ENCODE measurements at regions of chr10 and their contacts with region 1.

Region 1: GRCh38 chr10:72260588-72261322 is 13.0 kb upstream of the DDIT4 start:
- DNase-seq: peak; percentile 97
- ATAC-seq: peak; percentile 75
- H3K4me3 Mint-ChIP-seq: peak overlapping the region; percentile 78
- H3K27ac Mint-ChIP-seq: peak overlapping the region; percentile 97
- H3K4me1 Mint-ChIP-seq: peaks cover 70% of the 10 kb centered on the region
- H3K27me3 Mint-ChIP-seq: no peaks in the 10 kb centered on the region

Region 2: GRCh38 chr10:72097448-72098300 is 163.1 kb before region 1 on chr10:
- CTCF ChIA-PET with region 1: no interaction called
- POLR2A ChIA-PET with region 1: no interaction called
- intact Hi-C with region 1: loop called in 1 of 2 experiments (anchors 2 kb)
- DNase-seq: no peak
- ATAC-seq: peak; percentile 60
- H3K4me3 Mint-ChIP-seq: no peak overlapping the region
- H3K27ac Mint-ChIP-seq: peak overlapping the region; percentile 53
- H3K4me1 Mint-ChIP-seq: peaks cover 72% of the 10 kb centered on the region
- H3K27me3 Mint-ChIP-seq: no peaks in the 10 kb centered on the region

Region 3: GRCh38 chr10:72223743-72224101 is 37.0 kb before region 1 on chr10:
- CTCF ChIA-PET with region 1: interaction called, 16 read pairs
- POLR2A ChIA-PET with region 1: interaction called, 4 read pairs
- intact Hi-C with region 1: loop called in 1 of 2 experiments (anchors 1 kb)
- DNase-seq: no peak
- ATAC-seq: peak; percentile 41
- H3K4me3 Mint-ChIP-seq: peak overlapping the region; percentile 52
- H3K27ac Mint-ChIP-seq: peak overlapping the region; percentile 92
- H3K4me1 Mint-ChIP-seq: peaks cover 55% of the 10 kb centered on the region
- H3K27me3 Mint-ChIP-seq: no peaks in the 10 kb centered on the region

Region 4: DNA sequence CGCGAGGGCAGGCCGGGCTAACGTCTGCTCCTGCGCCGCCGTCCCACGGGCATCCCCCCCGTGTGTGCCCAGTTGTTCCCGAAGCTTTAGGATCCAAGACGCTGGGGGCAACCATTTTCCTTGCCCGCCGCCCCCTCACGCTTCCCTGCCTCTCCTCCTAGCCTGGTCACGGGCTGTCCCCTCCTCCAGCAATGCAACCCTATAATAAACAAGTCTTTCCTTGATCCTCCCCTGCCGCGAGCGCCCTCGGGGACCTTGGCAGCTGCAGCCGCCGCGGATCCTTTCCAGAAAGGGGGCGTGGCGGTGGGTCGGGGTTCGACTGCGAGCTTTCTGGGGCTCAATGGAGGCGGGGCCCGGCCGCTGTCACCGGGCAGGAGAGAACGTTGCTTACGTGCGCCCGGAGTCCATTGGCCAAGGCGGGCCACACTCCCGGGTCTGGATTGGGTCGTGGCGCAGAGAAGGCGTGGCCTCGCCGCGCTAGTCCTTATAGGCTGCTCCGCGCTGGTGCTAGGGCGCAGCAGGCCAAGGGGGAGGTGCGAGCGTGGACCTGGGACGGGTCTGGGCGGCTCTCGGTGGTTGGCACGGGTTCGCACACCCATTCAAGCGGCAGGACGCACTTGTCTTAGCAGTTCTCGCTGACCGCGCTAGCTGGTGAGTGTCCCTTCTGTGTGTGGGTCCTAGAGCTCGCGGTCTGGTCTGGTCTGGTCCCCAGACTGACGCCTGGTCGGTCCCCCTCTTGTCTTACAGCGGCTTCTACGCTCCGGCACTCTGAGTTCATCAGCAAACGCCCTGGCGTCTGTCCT is 12.9 kb after region 1 on chr10 and contains the start of gene DDIT4:
- CTCF ChIA-PET with region 1: interaction called, 18 read pairs
- POLR2A ChIA-PET with region 1: interaction called, 31 read pairs
- intact Hi-C with region 1: loop called (anchors 1 kb)
- DNase-seq: peak; percentile 100
- ATAC-seq: peak; percentile 84
- H3K4me3 Mint-ChIP-seq: peak within 1 kb of the TSS; percentile 95
- H3K27ac Mint-ChIP-seq: peak within 1 kb of the TSS; percentile 99
- H3K4me1 Mint-ChIP-seq: peaks cover 44% of the 10 kb centered on the region
- H3K27me3 Mint-ChIP-seq: no peaks in the 10 kb centered on the region
- total RNA-seq, gene DDIT4: 750 to 1,039 TPM

Region 5: GRCh38 chr10:72297968-72298773 is 37.4 kb after region 1 on chr10:
- CTCF ChIA-PET with region 1: interaction called, 5 read pairs
- POLR2A ChIA-PET with region 1: interaction called, 34 read pairs
- intact Hi-C with region 1: loop called (anchors 1 kb)
- DNase-seq: peak; percentile 98
- ATAC-seq: peak; percentile 72
- H3K4me3 Mint-ChIP-seq: peak overlapping the region; percentile 80
- H3K27ac Mint-ChIP-seq: peak overlapping the region; percentile 99
- H3K4me1 Mint-ChIP-seq: peaks cover 68% of the 10 kb centered on the region
- H3K27me3 Mint-ChIP-seq: no peaks in the 10 kb centered on the region

Region 6: GRCh38 chr10:72483471-72483870 is 222.7 kb after region 1 on chr10:
- CTCF ChIA-PET with region 1: no interaction called
- POLR2A ChIA-PET with region 1: no interaction called
- intact Hi-C with region 1: no loop called
- DNase-seq: no peak
- ATAC-seq: no peak
- H3K4me3 Mint-ChIP-seq: no peak overlapping the region
- H3K27ac Mint-ChIP-seq: no peak overlapping the region
- H3K4me1 Mint-ChIP-seq: no peaks in the 10 kb centered on the region
- H3K27me3 Mint-ChIP-seq: no peaks in the 10 kb centered on the region

Measured in activated CD4-positive, alpha-beta T cell treated with anti-CD3 and anti-CD28 coated beads for 36 hours (primary cell).